Endothelial cell of umbilical vein (primary cell): ENCODE measurements at regions of chr1 and their contacts with region 1.

Region 1: DNA sequence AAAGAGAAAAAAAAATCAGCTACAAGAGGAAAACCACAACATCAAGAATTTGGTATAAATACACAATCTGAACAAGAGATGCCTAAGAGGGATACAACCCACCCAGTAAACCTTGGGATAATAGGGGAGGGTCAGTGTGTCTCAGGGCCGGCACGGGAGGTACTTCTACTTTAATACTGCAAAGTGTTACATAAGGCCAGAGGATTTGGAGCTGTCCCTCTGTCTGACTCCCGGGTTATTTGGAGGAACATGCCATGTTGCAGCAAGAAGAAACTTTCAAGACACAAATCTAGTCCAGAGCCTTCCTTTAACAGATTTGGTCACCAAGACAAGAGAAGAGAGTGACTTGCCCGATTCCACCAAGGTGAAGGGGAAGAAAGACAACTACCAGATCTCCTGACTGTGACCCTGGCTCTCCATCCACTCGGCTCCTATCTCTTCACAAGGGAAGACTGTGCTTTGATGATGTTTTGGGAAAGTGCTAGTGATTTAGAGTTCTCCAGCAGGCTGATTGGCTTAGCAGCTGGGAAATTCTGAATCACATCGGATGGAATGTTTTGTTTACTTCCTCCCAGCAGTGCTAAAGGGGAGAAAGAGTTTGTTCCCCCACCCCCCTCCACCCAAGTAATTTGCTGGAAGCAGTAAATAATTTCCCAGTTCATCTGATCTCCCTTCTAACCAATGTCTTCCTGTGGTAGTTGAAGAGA is 29.3 kb downstream of the SGIP1 start:
- DNase-seq: peak; percentile 97
- H3K4me3 ChIP-seq: peak overlapping the region in 1 of 3 experiments; percentile 23
- H3K27ac ChIP-seq: peak overlapping the region; percentile 98
- H3K4me1 ChIP-seq: peaks cover 29% of the 10 kb centered on the region
- H3K27me3 ChIP-seq: no peaks in the 10 kb centered on the region
- CTCF ChIP-seq: no peak
- POLR2A ChIP-seq: peak; percentile 53

Region 2: DNA sequence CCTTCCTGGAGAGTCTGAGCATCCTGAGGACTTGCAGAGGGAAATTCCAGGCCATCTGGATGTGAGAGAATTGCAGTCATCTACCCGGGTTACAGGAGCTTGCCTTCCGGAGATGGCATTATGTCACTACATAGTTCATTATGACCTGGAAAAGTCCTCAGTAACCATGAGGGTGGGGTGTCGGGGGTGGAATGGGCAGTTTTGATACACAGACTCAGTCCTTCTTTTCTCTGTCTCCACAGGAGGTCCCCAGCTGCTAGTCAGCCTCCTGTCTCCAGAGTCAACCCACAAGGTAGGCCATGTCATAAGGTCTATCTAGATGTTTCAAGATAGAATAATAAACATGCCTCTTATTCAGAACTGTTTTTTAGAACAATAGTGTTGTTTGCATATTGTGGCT is 297.5 kb before region 1 on chr1:
- CTCF ChIA-PET with region 1: no interaction called
- POLR2A ChIA-PET with region 1: no interaction called
- dilution Hi-C with region 1: no loop called
- intact Hi-C with region 1: loop called (anchors 1 kb)
- DNase-seq: peak; percentile 83
- H3K4me3 ChIP-seq: no peak overlapping the region
- H3K27ac ChIP-seq: peak overlapping the region; percentile 89
- H3K4me1 ChIP-seq: peaks cover 66% of the 10 kb centered on the region
- H3K27me3 ChIP-seq: no peaks in the 10 kb centered on the region
- CTCF ChIP-seq: no peak
- POLR2A ChIP-seq: no peak

Region 3: GRCh38 chr1:66527686-66528085 is 35.6 kb before region 1 on chr1:
- CTCF ChIA-PET with region 1: no interaction called
- POLR2A ChIA-PET with region 1: no interaction called
- dilution Hi-C with region 1: no loop called
- intact Hi-C with region 1: loop called (anchors 1 kb)
- DNase-seq: peak; percentile 91
- H3K4me3 ChIP-seq: no peak overlapping the region
- H3K27ac ChIP-seq: peak overlapping the region; percentile 81
- H3K4me1 ChIP-seq: peaks cover 35% of the 10 kb centered on the region
- H3K27me3 ChIP-seq: no peaks in the 10 kb centered on the region
- CTCF ChIP-seq: no peak
- POLR2A ChIP-seq: peak; percentile 47

Region 4: DNA sequence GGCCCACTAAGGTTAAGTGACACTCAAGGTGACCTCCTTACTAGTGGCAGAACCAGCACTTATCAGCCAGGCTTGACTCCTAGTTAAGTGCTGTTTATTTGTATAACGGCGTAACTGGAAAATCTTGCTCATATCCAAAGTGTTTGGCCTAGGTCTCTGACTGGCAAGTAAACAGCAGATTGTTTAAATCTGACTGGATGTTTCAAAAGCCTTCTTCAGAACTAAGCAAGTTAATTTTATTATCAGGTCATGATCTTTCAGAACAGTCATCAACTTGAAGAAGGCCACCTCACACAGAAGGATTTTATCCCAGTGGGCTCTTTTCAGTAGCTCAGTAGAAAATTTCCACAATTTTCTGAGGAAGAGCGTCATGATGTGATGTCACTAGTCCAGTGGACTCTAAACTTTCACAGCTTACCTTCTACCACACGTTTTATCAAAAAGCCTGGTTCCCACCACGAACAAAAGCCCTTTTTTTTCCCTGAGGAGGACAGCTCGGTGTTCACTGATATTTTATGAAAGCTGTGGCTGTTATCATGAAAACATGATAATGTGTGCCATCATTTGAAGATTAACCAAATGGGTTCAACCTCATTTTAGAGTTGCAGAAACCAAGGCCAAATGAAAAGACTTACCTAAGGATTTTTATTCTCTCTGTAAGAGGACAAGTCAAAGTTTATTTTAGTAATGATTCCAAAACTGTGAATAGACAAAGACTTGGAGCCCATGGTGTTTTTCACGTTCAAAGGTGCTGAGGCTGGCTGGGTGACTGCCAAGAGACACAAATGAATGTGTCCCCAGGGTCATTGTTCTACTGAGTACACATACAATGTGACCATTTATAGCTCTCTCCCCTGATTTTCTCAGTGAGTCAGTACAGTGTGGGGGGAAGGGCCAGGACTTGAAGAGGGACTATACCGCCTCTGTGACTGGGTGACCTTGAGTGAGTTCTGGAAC is 20.2 kb before region 1 on chr1:
- CTCF ChIA-PET with region 1: no interaction called
- POLR2A ChIA-PET with region 1: no interaction called
- dilution Hi-C with region 1: no loop called
- intact Hi-C with region 1: loop called (anchors 1 kb)
- DNase-seq: peak; percentile 97
- H3K4me3 ChIP-seq: no peak overlapping the region
- H3K27ac ChIP-seq: peak overlapping the region; percentile 90
- H3K4me1 ChIP-seq: peaks cover 36% of the 10 kb centered on the region
- H3K27me3 ChIP-seq: no peaks in the 10 kb centered on the region
- CTCF ChIP-seq: no peak
- POLR2A ChIP-seq: no peak

Region 5: DNA sequence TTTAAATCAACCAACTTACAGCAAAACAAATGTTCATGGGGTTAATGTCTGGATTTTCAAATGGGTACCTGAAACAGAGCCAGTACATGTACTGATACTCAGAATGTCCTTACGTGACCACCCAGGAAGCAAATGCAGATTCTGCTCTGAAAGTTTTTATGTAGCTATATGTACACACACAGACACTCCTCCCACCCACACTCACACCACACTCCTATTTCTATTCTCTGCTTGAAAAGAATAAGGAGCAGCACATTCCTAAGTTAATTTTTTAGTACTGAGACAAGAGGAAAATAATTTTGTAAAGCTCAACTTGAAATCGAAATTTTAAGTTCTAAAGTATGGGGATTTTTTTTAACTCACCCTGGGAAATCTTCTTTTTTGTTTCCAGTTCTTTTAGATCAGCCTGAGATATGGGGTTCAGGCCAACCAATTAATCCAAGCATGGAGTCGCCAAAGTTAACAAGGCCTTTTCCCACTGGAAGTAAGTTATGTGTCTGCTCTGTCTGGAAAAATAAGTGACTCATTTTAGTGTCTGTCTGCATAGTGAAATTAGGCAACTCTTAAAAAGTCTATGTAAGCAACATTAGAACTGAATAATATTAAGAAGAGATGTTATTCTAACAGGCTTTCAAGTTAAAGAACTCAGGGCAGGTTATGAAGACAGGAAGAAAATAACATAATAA is 113.5 kb after region 1 on chr1:
- CTCF ChIA-PET with region 1: no interaction called
- POLR2A ChIA-PET with region 1: no interaction called
- dilution Hi-C with region 1: no loop called
- intact Hi-C with region 1: loop called (anchors 1 kb)
- DNase-seq: peak; percentile 94
- H3K4me3 ChIP-seq: no peak overlapping the region
- H3K27ac ChIP-seq: peak overlapping the region; percentile 74
- H3K4me1 ChIP-seq: peaks cover 31% of the 10 kb centered on the region
- H3K27me3 ChIP-seq: no peaks in the 10 kb centered on the region
- CTCF ChIP-seq: no peak
- POLR2A ChIP-seq: no peak